ENCODE measurements at regions of chr4 and their contacts with region 1.

Region 1: GRCh38 chr4:101693842-101694398 is 96.6 kb upstream of the BANK1 start:
- DNase-seq: peak; percentile 61
- ATAC-seq: peak; percentile 71
- H3K4me3 ChIP-seq: peak overlapping the region in 3 of 5 experiments; percentile 13 to 41 (median 16)
- H3K4me3 Mint-ChIP-seq: peak overlapping the region; percentile 79
- H3K27ac ChIP-seq: peak overlapping the region; percentile 59 to 65
- H3K27ac Mint-ChIP-seq: peak overlapping the region; percentile 87
- H3K4me1 ChIP-seq: peaks cover 39 to 41% of the 10 kb centered on the region in 2 donors
- H3K4me1 Mint-ChIP-seq: peaks cover 67% of the 10 kb centered on the region
- H3K27me3 ChIP-seq: no peaks in the 10 kb centered on the region
- H3K27me3 Mint-ChIP-seq: no peaks in the 10 kb centered on the region
- CTCF ChIP-seq: no peak

Region 2: GRCh38 chr4:101081695-101082369 is 612.1 kb before region 1 on chr4:
- CTCF ChIA-PET with region 1: no interaction called
- POLR2A ChIA-PET with region 1: no interaction called
- intact Hi-C with region 1: loop called (anchors 5 kb)
- DNase-seq: no peak
- ATAC-seq: no peak
- H3K4me3 ChIP-seq: no peak overlapping the region
- H3K4me3 Mint-ChIP-seq: no peak overlapping the region
- H3K27ac ChIP-seq: peak overlapping the region in 1 of 2 donors; percentile 13
- H3K27ac Mint-ChIP-seq: no peak overlapping the region
- H3K4me1 ChIP-seq: peaks cover 22 to 30% of the 10 kb centered on the region in 2 donors
- H3K4me1 Mint-ChIP-seq: peaks cover 43% of the 10 kb centered on the region
- H3K27me3 ChIP-seq: no peaks in the 10 kb centered on the region
- H3K27me3 Mint-ChIP-seq: no peaks in the 10 kb centered on the region
- CTCF ChIP-seq: no peak

Region 3: DNA sequence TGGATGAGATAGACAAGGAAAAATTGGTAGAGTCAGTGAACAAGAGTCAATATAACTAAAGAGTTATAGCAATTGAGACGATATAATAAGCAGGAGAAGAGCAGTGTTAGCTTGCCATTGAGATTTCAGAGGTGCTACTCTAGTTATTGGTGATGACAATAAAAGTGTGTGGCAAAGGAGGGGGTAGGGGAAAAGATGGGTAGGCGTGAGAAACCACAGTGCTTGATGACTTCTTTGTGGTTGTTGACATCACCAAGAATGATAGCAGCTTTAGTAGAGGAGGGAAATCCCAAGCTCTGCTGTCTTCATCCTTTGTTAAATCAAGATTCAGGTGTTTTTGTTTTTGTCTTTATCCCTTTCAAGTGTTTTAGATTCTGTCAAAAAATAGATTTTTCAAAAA is 166.7 kb before region 1 on chr4:
- CTCF ChIA-PET with region 1: no interaction called
- POLR2A ChIA-PET with region 1: no interaction called
- intact Hi-C with region 1: loop called (anchors 10 kb)
- DNase-seq: peak; percentile 71
- ATAC-seq: peak; percentile 99
- H3K4me3 ChIP-seq: no peak overlapping the region
- H3K4me3 Mint-ChIP-seq: peak overlapping the region; percentile 7
- H3K27ac ChIP-seq: no peak overlapping the region
- H3K27ac Mint-ChIP-seq: peak overlapping the region; percentile 34
- H3K4me1 ChIP-seq: peaks cover 4 to 9% of the 10 kb centered on the region in 2 donors
- H3K4me1 Mint-ChIP-seq: peaks cover 18% of the 10 kb centered on the region
- H3K27me3 ChIP-seq: no peaks in the 10 kb centered on the region
- H3K27me3 Mint-ChIP-seq: no peaks in the 10 kb centered on the region
- CTCF ChIP-seq: no peak

Region 4: DNA sequence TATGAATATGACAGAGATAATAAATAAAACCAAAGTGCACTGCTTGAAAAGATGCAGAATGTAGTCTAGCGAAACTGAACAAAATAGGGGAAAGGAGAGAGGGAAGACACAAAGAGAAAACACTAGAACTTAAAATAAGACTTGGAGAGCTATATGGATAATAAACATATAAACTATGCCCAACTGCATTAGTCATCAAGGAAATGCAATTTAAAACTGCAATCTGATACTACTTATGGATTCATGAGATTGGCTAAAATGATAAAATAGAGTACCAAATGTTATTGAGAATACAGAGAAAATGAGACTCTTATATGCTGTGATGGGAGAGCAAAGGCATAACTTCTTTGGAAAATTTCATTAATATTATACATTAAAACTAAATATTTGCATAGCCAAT is 14.7 kb after region 1 on chr4:
- CTCF ChIA-PET with region 1: no interaction called
- POLR2A ChIA-PET with region 1: interaction called, 3 read pairs
- intact Hi-C with region 1: loop called (anchors 2 kb)
- DNase-seq: no peak
- ATAC-seq: no peak
- H3K4me3 ChIP-seq: no peak overlapping the region
- H3K4me3 Mint-ChIP-seq: no peak overlapping the region
- H3K27ac ChIP-seq: no peak overlapping the region
- H3K27ac Mint-ChIP-seq: no peak overlapping the region
- H3K4me1 ChIP-seq: no peaks in the 10 kb centered on the region
- H3K4me1 Mint-ChIP-seq: no peaks in the 10 kb centered on the region
- H3K27me3 ChIP-seq: no peaks in the 10 kb centered on the region
- H3K27me3 Mint-ChIP-seq: no peaks in the 10 kb centered on the region
- CTCF ChIP-seq: no peak